Activated T-helper 2 cell treated with anti-CD3 and anti-CD28 coated beads, Interferon-gamma antibody, Interleukin-2, Interleukin-4, amounts not matched to agents 10 μg/mL and 5 μg/mL and 100 μg/mL, durations not matched to agents 14 hours and 24 hours and 36 hours (primary cell): ENCODE measurements at regions of chr9 and their contacts with region 1.

Region 1: GRCh38 chr9:91423785-91424402 is at the start of gene NFIL3:
- DNase-seq: peak; percentile 71
- H3K4me3 Mint-ChIP-seq: peak within 1 kb of the TSS; percentile 100
- H3K27ac Mint-ChIP-seq: peak within 1 kb of the TSS; percentile 99
- H3K4me1 Mint-ChIP-seq: peaks cover 51% of the 10 kb centered on the region
- H3K27me3 Mint-ChIP-seq: no peaks in the 10 kb centered on the region
- total RNA-seq, gene NFIL3: 191 and 192 TPM in 2 replicates

Region 2: GRCh38 chr9:90964101-90965020 is 459.5 kb before region 1 on chr9:
- intact Hi-C with region 1: loop called (anchors 5 kb)
- DNase-seq: peak; percentile 17
- H3K4me3 Mint-ChIP-seq: peak overlapping the region; percentile 69
- H3K27ac Mint-ChIP-seq: peak overlapping the region; percentile 81
- H3K4me1 Mint-ChIP-seq: peaks cover 65% of the 10 kb centered on the region
- H3K27me3 Mint-ChIP-seq: no peaks in the 10 kb centered on the region

Region 3: DNA sequence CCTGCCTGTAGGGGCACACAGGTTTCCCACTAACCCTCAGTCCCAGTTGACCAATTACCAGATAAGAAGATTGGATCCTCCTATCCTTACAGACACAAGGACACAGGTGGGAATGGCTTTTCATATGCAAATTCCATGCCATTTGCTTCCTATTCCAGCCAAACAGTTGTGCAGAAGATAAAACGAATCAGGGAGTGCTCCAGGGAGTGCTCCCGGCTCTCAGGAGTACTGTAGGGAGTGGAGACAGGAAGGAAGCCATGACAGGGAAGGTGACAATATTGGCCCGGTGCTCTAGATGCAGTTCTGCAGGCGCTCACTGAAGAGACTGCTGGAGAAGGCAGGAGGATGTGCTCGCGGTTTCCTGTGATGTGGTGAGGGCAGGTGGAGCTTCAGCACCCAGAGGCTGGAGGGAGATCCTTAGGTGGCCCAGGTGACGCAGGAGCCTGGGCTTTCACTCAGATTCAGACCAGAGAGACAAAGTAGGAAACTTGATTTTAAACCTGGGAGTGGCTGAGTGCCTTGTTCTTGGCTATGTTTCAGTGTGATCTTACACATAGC is 322.2 kb before region 1 on chr9:
- intact Hi-C with region 1: loop called (anchors 1 kb)
- DNase-seq: peak; percentile 85
- H3K4me3 Mint-ChIP-seq: peak overlapping the region; percentile 78
- H3K27ac Mint-ChIP-seq: peak overlapping the region; percentile 93
- H3K4me1 Mint-ChIP-seq: peaks cover 64% of the 10 kb centered on the region
- H3K27me3 Mint-ChIP-seq: no peaks in the 10 kb centered on the region

Region 4: GRCh38 chr9:91253488-91253887 is 170.4 kb before region 1 on chr9:
- intact Hi-C with region 1: loop called (anchors 2 kb)
- DNase-seq: peak; percentile 67
- H3K4me3 Mint-ChIP-seq: no peak overlapping the region
- H3K27ac Mint-ChIP-seq: no peak overlapping the region
- H3K4me1 Mint-ChIP-seq: peaks cover 62% of the 10 kb centered on the region
- H3K27me3 Mint-ChIP-seq: no peaks in the 10 kb centered on the region

Region 5: GRCh38 chr9:91395553-91396471 is 28.1 kb before region 1 on chr9:
- intact Hi-C with region 1: loop called (anchors 2 kb)
- DNase-seq: peak; percentile 26
- H3K4me3 Mint-ChIP-seq: peak overlapping the region; percentile 54
- H3K27ac Mint-ChIP-seq: peak overlapping the region; percentile 86
- H3K4me1 Mint-ChIP-seq: peaks cover 24% of the 10 kb centered on the region
- H3K27me3 Mint-ChIP-seq: no peaks in the 10 kb centered on the region

Region 6: DNA sequence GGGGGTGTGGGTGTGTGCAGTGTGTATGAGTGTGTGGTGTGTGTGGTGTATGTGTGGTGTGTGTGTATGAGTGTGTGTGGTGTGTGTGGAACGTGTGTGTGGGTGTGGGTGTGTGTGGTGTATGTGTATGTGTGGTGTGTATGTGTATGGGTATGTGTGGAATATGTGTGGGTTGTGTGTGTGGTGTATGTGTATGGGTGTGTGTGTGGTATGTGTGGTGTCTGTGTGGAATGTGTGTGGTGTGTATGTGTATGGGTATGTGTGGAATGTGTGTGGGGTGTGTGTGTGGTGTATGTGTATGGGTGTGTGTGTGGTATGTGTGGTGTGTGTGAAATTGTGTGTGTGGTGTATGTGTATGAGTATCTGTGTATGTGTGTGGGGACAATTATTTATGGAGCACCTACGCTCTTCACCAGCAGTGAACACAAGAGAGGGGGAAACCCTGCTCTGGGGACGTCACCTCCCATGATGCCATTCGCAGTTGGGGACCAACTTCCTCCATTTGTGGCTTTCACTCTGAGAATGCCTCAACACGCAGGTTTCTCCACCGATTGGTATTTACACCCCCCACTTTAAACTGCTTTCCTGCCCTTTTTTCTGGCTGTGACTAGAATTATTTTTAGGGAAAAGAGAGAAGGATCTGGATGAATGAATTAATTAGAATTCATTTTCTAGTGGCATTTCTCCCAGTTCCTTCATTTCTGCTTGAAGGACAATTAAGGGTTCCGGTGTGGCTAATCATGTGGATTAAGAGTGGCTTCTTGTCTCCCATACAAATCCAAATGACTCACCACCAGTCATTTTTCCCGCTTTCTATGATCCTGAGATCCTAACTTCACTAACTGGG is 288.1 kb after region 1 on chr9:
- intact Hi-C with region 1: loop called (anchors 1 kb)
- DNase-seq: peak; percentile 72
- H3K4me3 Mint-ChIP-seq: no peak overlapping the region
- H3K27ac Mint-ChIP-seq: no peak overlapping the region
- H3K4me1 Mint-ChIP-seq: peaks cover 18% of the 10 kb centered on the region
- H3K27me3 Mint-ChIP-seq: peaks cover 8% of the 10 kb centered on the region